Sigmoid colon (tissue), 7 donors: ENCODE measurements at regions of chr2 and their contacts with region 1.

Region 1: DNA sequence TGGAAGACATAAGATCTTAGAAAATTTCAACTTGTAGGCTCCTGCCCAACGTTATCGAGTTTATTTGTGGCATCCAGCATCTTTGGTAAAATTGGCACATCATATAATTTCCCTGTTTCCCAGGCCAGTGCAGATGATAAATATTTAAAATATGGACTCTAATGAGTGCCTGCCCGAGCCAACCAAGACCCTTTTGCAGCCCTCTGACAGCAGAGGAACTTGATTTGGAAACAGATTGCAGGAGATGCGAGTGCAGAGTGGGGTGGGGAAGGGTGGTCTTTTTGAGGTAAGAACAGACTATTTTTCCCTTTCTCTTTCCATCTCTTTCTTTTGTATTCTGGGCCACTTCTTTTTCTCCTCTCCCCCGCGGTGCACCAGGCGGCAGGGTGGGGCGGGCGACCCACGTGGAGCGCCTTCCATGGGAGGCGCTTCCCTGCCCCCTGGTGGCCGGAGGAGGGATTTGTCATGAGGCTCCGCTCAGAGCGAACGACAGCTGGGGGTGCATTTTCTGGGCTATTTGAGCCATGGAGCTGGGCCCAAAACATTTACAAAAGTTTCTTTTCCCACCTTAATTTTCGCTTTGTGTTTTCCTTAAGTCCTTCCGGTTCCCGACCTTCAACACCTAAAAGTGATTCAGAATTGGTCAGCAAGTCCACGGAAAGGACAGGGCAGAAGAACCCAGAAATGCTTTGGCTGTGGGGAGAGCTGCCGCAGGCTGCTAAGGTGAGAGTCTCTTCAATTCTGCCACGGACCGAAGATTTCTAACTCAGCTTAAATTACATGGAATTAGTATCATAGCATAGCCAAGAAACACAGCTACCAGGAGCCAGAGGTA is 32.7 kb downstream of the LPIN1 start:
- DNase-seq: peak; percentile 87
- H3K4me3 ChIP-seq: no peak overlapping the region
- H3K27ac ChIP-seq: no peak overlapping the region
- H3K4me1 ChIP-seq: peaks cover 0 to 33% (median 27%) of the 10 kb centered on the region in 4 donors
- H3K27me3 ChIP-seq: no peaks in the 10 kb centered on the region
- CTCF ChIP-seq: peak; percentile 91 to 98 (median 95)
- EP300 ChIP-seq: no peak
- POLR2A ChIP-seq: no peak

Region 2: GRCh38 chr2:11692966-11693521 is 86.1 kb before region 1 on chr2:
- intact Hi-C with region 1: loop called (anchors 1 kb)
- DNase-seq: peak; percentile 78
- H3K4me3 ChIP-seq: no peak overlapping the region
- H3K27ac ChIP-seq: no peak overlapping the region
- H3K4me1 ChIP-seq: peaks cover 0 to 37% (median 30%) of the 10 kb centered on the region in 4 donors
- H3K27me3 ChIP-seq: no peaks in the 10 kb centered on the region
- CTCF ChIP-seq: peak; percentile 31 to 77 (median 64)
- EP300 ChIP-seq: no peak
- POLR2A ChIP-seq: no peak

Region 3: DNA sequence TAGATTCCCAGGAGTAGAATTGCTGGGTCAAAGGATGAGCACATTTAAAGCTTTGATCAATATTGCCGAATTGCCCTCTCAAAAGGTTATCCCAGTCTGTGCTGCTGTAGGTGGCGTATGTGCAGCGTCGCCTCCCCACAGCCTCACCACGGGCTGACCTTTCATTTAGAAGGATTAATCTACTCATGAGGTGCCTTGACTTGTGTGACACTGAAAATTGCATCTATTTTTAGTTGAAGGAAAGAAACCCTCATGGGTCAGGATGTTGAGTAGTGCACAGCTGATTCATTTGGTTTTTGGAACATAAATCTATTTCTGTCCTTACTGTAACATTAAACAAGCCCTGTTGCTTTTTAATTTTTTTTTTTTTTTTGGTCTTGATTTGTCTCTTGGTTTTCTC is 28.0 kb after region 1 on chr2:
- intact Hi-C with region 1: no loop called
- DNase-seq: no peak
- H3K4me3 ChIP-seq: no peak overlapping the region
- H3K27ac ChIP-seq: no peak overlapping the region
- H3K4me1 ChIP-seq: peaks cover 0 to 4% (median 0%) of the 10 kb centered on the region in 4 donors
- H3K27me3 ChIP-seq: no peaks in the 10 kb centered on the region
- CTCF ChIP-seq: no peak
- EP300 ChIP-seq: no peak
- POLR2A ChIP-seq: no peak